ENCODE measurements at regions of chr1 and their contacts with region 1.

Region 1: GRCh38 chr1:167263819-167264464 is 43.3 kb downstream of the POU2F1 start:
- DNase-seq: no peak
- H3K4me3 Mint-ChIP-seq: no peak overlapping the region
- H3K27ac Mint-ChIP-seq: no peak overlapping the region
- H3K4me1 Mint-ChIP-seq: peaks cover 23% of the 10 kb centered on the region
- H3K27me3 Mint-ChIP-seq: no peaks in the 10 kb centered on the region

Region 2: GRCh38 chr1:167095368-167095767 is 168.6 kb before region 1 on chr1:
- CTCF ChIA-PET with region 1: no interaction called
- POLR2A ChIA-PET with region 1: no interaction called
- intact Hi-C with region 1: no loop called
- DNase-seq: no peak
- H3K4me3 Mint-ChIP-seq: no peak overlapping the region
- H3K27ac Mint-ChIP-seq: no peak overlapping the region
- H3K4me1 Mint-ChIP-seq: peaks cover 7% of the 10 kb centered on the region
- H3K27me3 Mint-ChIP-seq: peaks cover 2% of the 10 kb centered on the region

Region 3: DNA sequence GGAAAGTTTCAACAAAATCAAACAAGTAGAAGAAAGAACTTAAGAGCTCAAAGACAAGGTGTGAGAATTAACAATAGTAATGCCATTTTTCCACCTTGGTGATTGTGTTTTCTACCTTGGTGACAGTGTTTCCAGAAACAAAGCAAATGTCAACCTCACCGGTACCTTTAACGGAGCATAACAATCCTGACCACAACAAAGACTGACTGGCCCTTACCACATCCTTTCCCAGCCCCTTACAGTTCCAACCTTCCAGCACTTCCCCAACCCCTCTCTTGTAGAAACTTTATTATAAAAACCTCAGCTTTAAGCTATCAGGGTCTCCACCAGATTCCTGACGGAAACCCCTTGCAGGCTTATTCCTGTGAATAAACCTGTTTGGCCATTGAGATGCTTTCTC is 153.4 kb before region 1 on chr1:
- CTCF ChIA-PET with region 1: no interaction called
- POLR2A ChIA-PET with region 1: no interaction called
- intact Hi-C with region 1: no loop called
- DNase-seq: peak; percentile 43
- H3K4me3 Mint-ChIP-seq: no peak overlapping the region
- H3K27ac Mint-ChIP-seq: no peak overlapping the region
- H3K4me1 Mint-ChIP-seq: peaks cover 32% of the 10 kb centered on the region
- H3K27me3 Mint-ChIP-seq: no peaks in the 10 kb centered on the region

Region 4: DNA sequence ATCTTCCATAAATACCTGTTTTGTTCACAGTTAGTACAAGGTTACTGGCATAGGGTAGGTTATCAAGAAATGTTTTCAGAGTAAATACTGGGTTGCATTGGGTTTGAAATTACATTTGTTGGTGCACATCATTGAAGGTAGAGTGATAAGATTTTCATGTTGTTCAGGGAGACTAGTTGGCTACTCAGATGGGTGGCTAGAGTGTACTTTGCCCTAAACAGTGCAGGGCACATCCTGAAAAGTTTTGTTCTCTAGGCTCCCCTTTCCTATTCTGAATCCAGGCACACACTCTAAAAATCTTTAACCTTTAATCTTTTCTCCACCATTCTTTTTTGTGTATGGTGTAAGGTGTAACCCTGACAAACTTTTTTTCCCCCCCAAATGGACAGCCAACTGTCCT is 25.2 kb before region 1 on chr1:
- CTCF ChIA-PET with region 1: no interaction called
- POLR2A ChIA-PET with region 1: no interaction called
- intact Hi-C with region 1: no loop called
- DNase-seq: no peak
- H3K4me3 Mint-ChIP-seq: no peak overlapping the region
- H3K27ac Mint-ChIP-seq: no peak overlapping the region
- H3K4me1 Mint-ChIP-seq: peaks cover 23% of the 10 kb centered on the region
- H3K27me3 Mint-ChIP-seq: no peaks in the 10 kb centered on the region

Region 5: DNA sequence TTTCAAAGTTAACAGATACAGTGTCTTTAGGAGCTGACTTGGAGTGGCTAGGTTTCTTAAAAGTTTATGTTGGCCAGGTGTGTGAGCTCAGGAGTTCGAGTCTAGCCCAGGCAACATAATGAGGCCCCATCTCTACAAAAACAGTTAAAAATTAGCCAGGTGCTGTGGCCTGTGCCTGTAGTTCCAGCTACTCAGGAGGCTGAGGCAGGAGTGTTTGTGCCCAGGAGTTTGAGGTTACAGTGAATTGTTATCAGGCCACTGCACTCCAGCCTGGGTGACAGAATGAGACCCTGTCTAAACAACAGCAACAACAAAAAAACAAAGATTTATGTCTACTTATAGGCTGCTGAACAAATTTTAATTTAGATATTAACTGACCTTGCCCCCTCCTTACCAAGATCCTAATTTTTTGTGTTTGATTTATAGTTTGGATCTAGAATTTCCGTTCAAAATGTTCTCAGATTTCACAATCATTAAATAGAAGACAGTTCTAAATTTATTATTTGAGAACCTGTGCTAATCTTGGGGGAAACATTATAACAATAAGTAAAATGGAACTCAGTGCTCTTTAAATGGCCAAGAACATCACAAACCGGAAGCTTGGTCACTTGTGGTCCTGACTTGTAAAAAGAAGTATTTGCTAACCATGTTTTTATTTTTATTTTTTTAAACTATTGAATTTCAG is 24.6 kb after region 1 on chr1:
- CTCF ChIA-PET with region 1: interaction called, 12 read pairs
- POLR2A ChIA-PET with region 1: no interaction called
- intact Hi-C with region 1: no loop called
- DNase-seq: no peak
- H3K4me3 Mint-ChIP-seq: no peak overlapping the region
- H3K27ac Mint-ChIP-seq: no peak overlapping the region
- H3K4me1 Mint-ChIP-seq: peaks cover 15% of the 10 kb centered on the region
- H3K27me3 Mint-ChIP-seq: no peaks in the 10 kb centered on the region

Region 6: GRCh38 chr1:167342846-167343245 is 78.9 kb after region 1 on chr1:
- CTCF ChIA-PET with region 1: interaction called, 13 read pairs
- POLR2A ChIA-PET with region 1: no interaction called
- intact Hi-C with region 1: loop called (anchors 5 kb)
- DNase-seq: no peak
- H3K4me3 Mint-ChIP-seq: no peak overlapping the region
- H3K27ac Mint-ChIP-seq: no peak overlapping the region
- H3K4me1 Mint-ChIP-seq: peaks cover 4% of the 10 kb centered on the region
- H3K27me3 Mint-ChIP-seq: no peaks in the 10 kb centered on the region

Region 7: GRCh38 chr1:167409183-167409582 is 145.2 kb after region 1 on chr1:
- CTCF ChIA-PET with region 1: interaction called, 13 read pairs
- POLR2A ChIA-PET with region 1: no interaction called
- intact Hi-C with region 1: loop called (anchors 2 kb)
- DNase-seq: no peak
- H3K4me3 Mint-ChIP-seq: no peak overlapping the region
- H3K27ac Mint-ChIP-seq: no peak overlapping the region
- H3K4me1 Mint-ChIP-seq: peaks cover 22% of the 10 kb centered on the region
- H3K27me3 Mint-ChIP-seq: no peaks in the 10 kb centered on the region

Region 8: DNA sequence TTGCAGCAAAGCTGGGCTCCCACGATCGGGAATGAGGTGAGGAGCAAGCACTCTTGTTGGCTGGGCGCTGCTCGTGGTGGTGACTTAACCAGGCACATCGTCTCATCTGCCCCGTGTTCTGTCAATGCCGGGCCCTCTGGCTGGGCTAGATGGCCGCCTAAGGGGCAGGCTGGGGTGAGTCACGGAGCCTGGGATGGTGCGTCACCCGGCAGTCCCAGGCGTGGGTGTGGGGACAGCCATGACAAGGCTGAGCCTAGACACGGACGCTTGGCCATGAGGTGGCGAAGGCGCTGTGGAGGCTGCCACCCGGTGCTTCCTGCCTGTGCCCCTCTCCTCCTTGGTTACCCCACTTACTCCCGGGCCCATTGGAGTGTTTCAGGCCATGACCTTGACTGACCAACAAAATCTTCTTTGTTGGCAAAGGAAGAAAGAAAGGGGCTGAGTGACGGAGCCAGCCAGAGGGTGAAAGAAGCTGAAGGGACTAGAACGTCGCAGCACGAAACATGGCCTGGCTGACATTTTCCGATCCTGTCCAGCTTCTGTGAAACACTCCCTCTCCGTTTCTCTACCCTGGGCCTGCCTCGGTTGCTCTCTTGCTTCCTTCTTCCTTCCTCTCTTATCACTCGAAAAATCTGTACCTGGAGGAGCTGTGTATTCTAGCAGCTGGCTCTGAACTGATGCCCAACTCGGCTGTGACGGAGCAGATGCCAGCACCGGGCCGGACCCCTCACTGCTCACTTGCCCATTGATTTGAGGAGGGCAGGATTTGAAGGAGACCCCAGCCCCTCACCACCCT is 253.8 kb after region 1 on chr1:
- CTCF ChIA-PET with region 1: interaction called, 9 read pairs
- POLR2A ChIA-PET with region 1: no interaction called
- intact Hi-C with region 1: loop called (anchors 5 kb)
- DNase-seq: peak; percentile 96
- H3K4me3 Mint-ChIP-seq: peak overlapping the region; percentile 88
- H3K27ac Mint-ChIP-seq: peak overlapping the region; percentile 98
- H3K4me1 Mint-ChIP-seq: peaks cover 35% of the 10 kb centered on the region
- H3K27me3 Mint-ChIP-seq: no peaks in the 10 kb centered on the region

Measured in activated CD4-positive, alpha-beta memory T cell treated with anti-CD3 and anti-CD28 coated beads for 36 hours (primary cell).